CD8-positive, alpha-beta T cell (primary cell): ENCODE measurements at regions of chr18 and their contacts with region 1.

Region 1: DNA sequence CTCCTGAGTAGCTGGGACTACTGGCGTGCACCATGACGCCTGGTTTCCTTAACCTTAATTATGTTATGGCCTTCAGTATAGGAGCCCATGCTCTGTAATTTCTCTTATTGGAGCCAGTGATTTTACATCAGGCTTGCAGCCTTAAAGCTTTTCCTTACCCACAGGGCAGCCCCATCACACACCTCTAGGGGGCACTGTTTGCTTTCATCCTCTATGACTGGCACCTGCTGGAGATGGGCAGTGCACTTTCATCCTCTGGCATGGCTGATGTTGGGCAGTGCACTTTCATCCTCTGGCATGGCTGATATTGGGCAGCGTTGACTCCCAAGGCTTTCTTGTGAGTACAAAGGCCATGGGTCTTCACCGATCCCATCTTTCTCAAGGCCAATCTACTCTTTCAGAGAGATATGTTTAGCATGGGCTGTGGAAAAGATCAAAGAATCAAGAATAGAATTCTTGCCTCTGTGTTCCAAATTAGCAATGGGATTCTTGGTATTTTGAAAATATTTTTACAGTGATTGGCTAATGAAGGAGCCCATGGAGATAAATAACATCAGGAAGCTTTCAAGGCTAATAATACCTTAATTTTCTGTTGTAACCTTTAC is 80.7 kb upstream of the MEX3C start:
- DNase-seq: peak in 3 of 9 experiments; percentile 7 to 23 (median 7)
- ATAC-seq: no peak
- H3K4me3 ChIP-seq: no peak overlapping the region
- H3K4me3 Mint-ChIP-seq: no peak overlapping the region
- H3K27ac ChIP-seq: no peak overlapping the region
- H3K27ac Mint-ChIP-seq: no peak overlapping the region
- H3K4me1 ChIP-seq: no peaks in the 10 kb centered on the region
- H3K4me1 Mint-ChIP-seq: no peaks in the 10 kb centered on the region
- H3K27me3 ChIP-seq: no peaks in the 10 kb centered on the region
- H3K27me3 Mint-ChIP-seq: no peaks in the 10 kb centered on the region
- CTCF ChIP-seq: peak; percentile 25

Region 2: DNA sequence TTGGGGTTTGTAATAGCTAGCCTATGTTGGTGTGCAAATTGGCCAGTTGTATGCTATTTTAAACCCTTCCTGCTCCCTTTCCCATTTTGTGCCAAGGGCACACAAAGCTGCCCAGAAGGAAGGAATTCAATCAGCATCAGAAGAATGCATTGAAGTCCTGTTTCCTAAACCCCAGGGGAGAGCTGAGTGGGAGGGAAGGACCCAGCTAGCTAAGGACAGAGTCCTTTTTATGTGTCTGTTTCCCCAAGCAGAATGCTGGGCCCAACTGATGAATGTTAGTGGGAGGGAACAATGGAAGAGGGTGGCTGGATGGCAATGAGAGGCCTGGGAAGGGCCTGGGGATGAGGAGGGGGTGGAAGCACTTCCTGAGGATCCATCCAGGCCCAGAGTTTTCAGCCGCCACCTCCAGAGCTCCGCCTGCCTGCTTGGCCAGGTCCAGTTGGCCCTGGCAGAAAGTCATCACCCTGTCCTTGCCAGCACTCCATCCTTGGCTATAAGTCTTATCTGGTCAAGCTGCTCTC is 113.3 kb before region 1 on chr18:
- CTCF ChIA-PET with region 1: no interaction called
- POLR2A ChIA-PET with region 1: no interaction called
- intact Hi-C with region 1: no loop called
- DNase-seq: no peak
- ATAC-seq: no peak
- H3K4me3 ChIP-seq: no peak overlapping the region
- H3K4me3 Mint-ChIP-seq: no peak overlapping the region
- H3K27ac ChIP-seq: no peak overlapping the region
- H3K27ac Mint-ChIP-seq: no peak overlapping the region
- H3K4me1 ChIP-seq: peaks cover 3% of the 10 kb centered on the region
- H3K4me1 Mint-ChIP-seq: peaks cover 14% of the 10 kb centered on the region
- H3K27me3 ChIP-seq: no peaks in the 10 kb centered on the region
- H3K27me3 Mint-ChIP-seq: no peaks in the 10 kb centered on the region
- CTCF ChIP-seq: no peak

Region 3: GRCh38 chr18:51417643-51418483 is 139.7 kb after region 1 on chr18:
- CTCF ChIA-PET with region 1: no interaction called
- POLR2A ChIA-PET with region 1: no interaction called
- intact Hi-C with region 1: no loop called
- DNase-seq: no peak
- ATAC-seq: no peak
- H3K4me3 ChIP-seq: no peak overlapping the region
- H3K4me3 Mint-ChIP-seq: no peak overlapping the region
- H3K27ac ChIP-seq: no peak overlapping the region
- H3K27ac Mint-ChIP-seq: no peak overlapping the region
- H3K4me1 ChIP-seq: no peaks in the 10 kb centered on the region
- H3K4me1 Mint-ChIP-seq: no peaks in the 10 kb centered on the region
- H3K27me3 ChIP-seq: no peaks in the 10 kb centered on the region
- H3K27me3 Mint-ChIP-seq: no peaks in the 10 kb centered on the region
- CTCF ChIP-seq: no peak

Region 4: DNA sequence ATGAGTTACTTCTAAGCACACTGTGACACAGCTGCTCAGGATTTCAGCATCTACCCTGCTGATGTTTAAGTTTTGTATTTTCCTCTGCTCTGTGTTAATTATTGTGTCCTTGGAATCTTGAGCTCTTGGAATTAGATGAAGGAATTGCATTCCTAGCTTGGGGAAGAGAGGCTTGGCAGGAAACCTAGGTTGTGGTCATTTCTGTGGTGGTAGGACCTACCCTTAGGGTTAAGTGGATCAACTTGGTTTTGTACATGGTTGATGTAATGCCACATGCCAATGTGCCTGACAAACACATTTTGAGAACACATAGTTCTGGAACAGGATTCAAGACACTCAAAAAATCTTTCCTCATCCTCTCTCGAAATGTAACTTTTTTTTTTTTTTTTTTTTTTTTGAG is 183.8 kb after region 1 on chr18:
- CTCF ChIA-PET with region 1: no interaction called
- POLR2A ChIA-PET with region 1: no interaction called
- intact Hi-C with region 1: no loop called
- DNase-seq: no peak
- ATAC-seq: no peak
- H3K4me3 ChIP-seq: no peak overlapping the region
- H3K4me3 Mint-ChIP-seq: no peak overlapping the region
- H3K27ac ChIP-seq: no peak overlapping the region
- H3K27ac Mint-ChIP-seq: no peak overlapping the region
- H3K4me1 ChIP-seq: no peaks in the 10 kb centered on the region
- H3K4me1 Mint-ChIP-seq: no peaks in the 10 kb centered on the region
- H3K27me3 ChIP-seq: no peaks in the 10 kb centered on the region
- H3K27me3 Mint-ChIP-seq: peaks cover 11% of the 10 kb centered on the region
- CTCF ChIP-seq: no peak

Region 5: DNA sequence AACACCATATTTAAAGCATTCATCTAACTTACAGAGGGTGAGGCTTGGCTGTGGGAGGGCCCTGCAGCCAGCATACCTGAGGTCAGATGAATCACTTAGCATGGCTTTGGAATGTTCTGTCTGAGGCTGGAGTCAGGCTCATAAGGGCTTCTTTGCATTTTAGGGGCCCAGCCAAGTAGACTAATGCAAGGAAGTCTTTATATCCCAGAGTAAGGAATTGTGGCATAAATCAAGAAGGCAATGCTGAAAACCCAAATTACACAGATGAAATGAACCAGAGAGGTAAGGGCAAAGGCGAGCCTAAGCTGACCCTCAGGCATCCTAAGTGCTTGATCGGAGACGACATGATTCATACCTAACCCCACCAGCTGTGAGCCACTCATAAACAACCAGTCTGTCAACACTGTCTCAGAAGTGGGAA is 1445.4 kb after region 1 on chr18:
- CTCF ChIA-PET with region 1: no interaction called
- POLR2A ChIA-PET with region 1: no interaction called
- intact Hi-C with region 1: loop called in 1 of 2 experiments (anchors 10 kb)
- DNase-seq: no peak
- ATAC-seq: no peak
- H3K4me3 ChIP-seq: no peak overlapping the region
- H3K4me3 Mint-ChIP-seq: no peak overlapping the region
- H3K27ac ChIP-seq: no peak overlapping the region
- H3K27ac Mint-ChIP-seq: no peak overlapping the region
- H3K4me1 ChIP-seq: no peaks in the 10 kb centered on the region
- H3K4me1 Mint-ChIP-seq: no peaks in the 10 kb centered on the region
- H3K27me3 ChIP-seq: no peaks in the 10 kb centered on the region
- H3K27me3 Mint-ChIP-seq: no peaks in the 10 kb centered on the region
- CTCF ChIP-seq: no peak